ENCODE measurements at regions of chr17 and their contacts with region 1.

Region 1: GRCh38 chr17:41695954-41696756 is 7.5 kb downstream of the EIF1 start:
- DNase-seq: peak; percentile 42 to 86 (median 81)
- ATAC-seq: peak; percentile 55
- H3K4me3 ChIP-seq: no peak overlapping the region
- H3K4me3 Mint-ChIP-seq: no peak overlapping the region
- H3K27ac ChIP-seq: no peak overlapping the region
- H3K27ac Mint-ChIP-seq: peak overlapping the region; percentile 7
- H3K4me1 ChIP-seq: peaks cover 5% of the 10 kb centered on the region
- H3K4me1 Mint-ChIP-seq: peaks cover 29% of the 10 kb centered on the region
- H3K27me3 ChIP-seq: no peaks in the 10 kb centered on the region
- H3K27me3 Mint-ChIP-seq: no peaks in the 10 kb centered on the region
- CTCF ChIP-seq: peak; percentile 82

Region 2: GRCh38 chr17:41329281-41329948 is 366.7 kb before region 1 on chr17:
- CTCF ChIA-PET with region 1: no interaction called
- POLR2A ChIA-PET with region 1: no interaction called
- intact Hi-C with region 1: no loop called
- DNase-seq: peak in 3 of 9 experiments; percentile 16 to 43 (median 34)
- ATAC-seq: no peak
- H3K4me3 ChIP-seq: no peak overlapping the region
- H3K4me3 Mint-ChIP-seq: no peak overlapping the region
- H3K27ac ChIP-seq: no peak overlapping the region
- H3K27ac Mint-ChIP-seq: no peak overlapping the region
- H3K4me1 ChIP-seq: peaks cover 51% of the 10 kb centered on the region
- H3K4me1 Mint-ChIP-seq: peaks cover 48% of the 10 kb centered on the region
- H3K27me3 ChIP-seq: no peaks in the 10 kb centered on the region
- H3K27me3 Mint-ChIP-seq: no peaks in the 10 kb centered on the region
- CTCF ChIP-seq: no peak

Region 3: DNA sequence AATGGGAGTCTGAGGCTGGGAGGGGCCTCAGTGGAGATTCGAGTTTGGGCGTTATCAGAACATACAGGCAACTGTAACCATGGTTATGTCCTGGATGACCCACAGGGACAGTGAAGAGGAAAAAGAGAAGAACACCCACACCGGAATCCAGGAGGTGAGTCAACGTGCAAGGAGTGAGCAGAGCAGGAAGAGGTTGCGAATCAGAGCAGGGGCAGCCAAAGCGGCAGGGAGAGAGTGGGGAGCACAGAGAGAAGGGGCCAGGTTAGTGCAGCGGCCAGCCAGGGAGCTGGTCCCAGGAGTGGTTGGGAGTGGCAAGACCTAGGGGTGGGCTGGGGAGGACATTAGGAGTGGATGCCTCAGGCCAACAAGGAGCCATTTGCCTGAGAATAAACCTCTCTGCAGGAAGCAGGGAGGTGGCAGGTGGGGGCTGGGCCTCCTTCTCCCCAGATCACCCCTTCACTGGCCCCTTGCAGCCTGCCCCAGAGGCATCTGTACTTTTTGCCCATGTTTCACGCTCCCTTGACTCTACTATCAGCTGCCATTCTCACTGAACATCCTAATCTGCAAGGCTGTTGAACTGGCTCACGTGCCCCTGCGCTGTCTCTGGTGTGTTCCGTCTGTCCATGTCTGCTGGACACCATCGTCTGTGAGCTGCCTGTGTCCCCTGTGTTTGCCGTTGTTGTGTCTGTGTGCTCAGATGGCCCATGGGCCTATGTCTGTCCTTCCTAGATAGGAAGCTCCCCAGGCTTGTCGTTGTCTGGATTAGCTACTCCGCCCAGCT is 195.8 kb before region 1 on chr17:
- CTCF ChIA-PET with region 1: no interaction called
- POLR2A ChIA-PET with region 1: no interaction called
- intact Hi-C with region 1: no loop called
- DNase-seq: no peak
- ATAC-seq: no peak
- H3K4me3 ChIP-seq: no peak overlapping the region
- H3K4me3 Mint-ChIP-seq: no peak overlapping the region
- H3K27ac ChIP-seq: no peak overlapping the region
- H3K27ac Mint-ChIP-seq: peak overlapping the region; percentile 21
- H3K4me1 ChIP-seq: peaks cover 8% of the 10 kb centered on the region
- H3K4me1 Mint-ChIP-seq: peaks cover 6% of the 10 kb centered on the region
- H3K27me3 ChIP-seq: no peaks in the 10 kb centered on the region
- H3K27me3 Mint-ChIP-seq: peaks cover 6% of the 10 kb centered on the region
- CTCF ChIP-seq: no peak

Region 4: DNA sequence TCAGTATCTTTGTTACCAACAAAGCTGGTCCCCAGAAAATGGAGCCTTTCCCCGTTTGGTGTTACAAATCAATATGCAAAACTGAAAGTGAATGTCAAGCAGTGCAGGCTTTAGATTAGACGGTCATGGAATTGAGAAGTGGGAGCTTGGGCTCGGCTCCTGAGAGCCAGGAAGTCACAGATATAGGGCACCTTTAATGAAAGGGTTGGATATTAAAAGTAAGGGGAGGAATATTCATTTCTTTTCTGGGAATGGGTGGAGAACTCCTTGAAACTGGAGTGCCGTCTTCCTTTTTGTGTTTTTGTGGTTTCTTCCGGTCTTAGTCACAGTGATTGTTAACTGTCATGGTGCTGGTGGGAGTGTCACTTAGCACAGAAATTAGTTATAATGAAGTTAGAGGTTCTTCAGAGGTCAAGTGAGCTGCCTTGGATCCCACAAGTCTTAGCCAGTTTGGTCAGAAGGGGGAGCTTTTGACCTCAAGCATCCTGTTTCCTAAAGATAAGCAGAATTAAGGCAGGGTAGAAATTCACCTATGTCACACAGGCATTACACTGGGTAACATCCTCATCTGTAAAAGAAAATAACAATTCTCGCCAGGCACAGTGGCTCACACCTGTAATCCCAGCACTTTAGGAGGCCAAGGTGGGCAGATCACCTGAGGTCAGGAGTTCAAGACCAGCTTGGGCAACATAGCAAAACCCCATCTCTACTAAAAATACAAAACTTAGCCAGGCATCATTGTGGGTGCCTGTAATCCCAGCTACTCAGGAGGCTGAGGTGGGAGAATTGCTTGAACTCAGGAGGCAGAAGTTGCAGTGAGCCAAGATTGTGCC is 17.0 kb before region 1 on chr17:
- CTCF ChIA-PET with region 1: interaction called, 57 read pairs
- POLR2A ChIA-PET with region 1: interaction called, 159 read pairs
- intact Hi-C with region 1: loop called in 1 of 2 experiments (anchors 1 kb)
- DNase-seq: peak; percentile 15 to 89 (median 60)
- ATAC-seq: peak; percentile 88
- H3K4me3 ChIP-seq: peak overlapping the region; percentile 34 to 52
- H3K4me3 Mint-ChIP-seq: peak overlapping the region; percentile 86
- H3K27ac ChIP-seq: peak overlapping the region; percentile 64 to 74
- H3K27ac Mint-ChIP-seq: peak overlapping the region; percentile 97
- H3K4me1 ChIP-seq: peaks cover 14% of the 10 kb centered on the region
- H3K4me1 Mint-ChIP-seq: peaks cover 24% of the 10 kb centered on the region
- H3K27me3 ChIP-seq: no peaks in the 10 kb centered on the region
- H3K27me3 Mint-ChIP-seq: no peaks in the 10 kb centered on the region
- CTCF ChIP-seq: no peak

Region 5: GRCh38 chr17:41710468-41711090 is 14.4 kb after region 1 on chr17:
- CTCF ChIA-PET with region 1: interaction called, 26 read pairs
- POLR2A ChIA-PET with region 1: no interaction called
- intact Hi-C with region 1: no loop called
- DNase-seq: peak in 1 of 9 experiments; percentile 1
- ATAC-seq: no peak
- H3K4me3 ChIP-seq: no peak overlapping the region
- H3K4me3 Mint-ChIP-seq: no peak overlapping the region
- H3K27ac ChIP-seq: no peak overlapping the region
- H3K27ac Mint-ChIP-seq: no peak overlapping the region
- H3K4me1 ChIP-seq: no peaks in the 10 kb centered on the region
- H3K4me1 Mint-ChIP-seq: no peaks in the 10 kb centered on the region
- H3K27me3 ChIP-seq: peaks cover 0 to 5% of the 10 kb centered on the region in 2 experiments
- H3K27me3 Mint-ChIP-seq: peaks cover 5% of the 10 kb centered on the region
- CTCF ChIP-seq: no peak

Region 6: GRCh38 chr17:41730479-41730878 is 34.3 kb after region 1 on chr17:
- CTCF ChIA-PET with region 1: no interaction called
- POLR2A ChIA-PET with region 1: no interaction called
- intact Hi-C with region 1: no loop called
- DNase-seq: no peak
- ATAC-seq: no peak
- H3K4me3 ChIP-seq: no peak overlapping the region
- H3K4me3 Mint-ChIP-seq: no peak overlapping the region
- H3K27ac ChIP-seq: no peak overlapping the region
- H3K27ac Mint-ChIP-seq: no peak overlapping the region
- H3K4me1 ChIP-seq: peaks cover 10% of the 10 kb centered on the region
- H3K4me1 Mint-ChIP-seq: peaks cover 4% of the 10 kb centered on the region
- H3K27me3 ChIP-seq: peaks cover 12 to 20% of the 10 kb centered on the region in 2 experiments
- H3K27me3 Mint-ChIP-seq: peaks cover 26% of the 10 kb centered on the region
- CTCF ChIP-seq: no peak

Region 7: GRCh38 chr17:41825175-41825845 is 129.2 kb after region 1 on chr17:
- CTCF ChIA-PET with region 1: no interaction called
- POLR2A ChIA-PET with region 1: no interaction called
- intact Hi-C with region 1: no loop called
- DNase-seq: no peak
- ATAC-seq: no peak
- H3K4me3 ChIP-seq: no peak overlapping the region
- H3K4me3 Mint-ChIP-seq: no peak overlapping the region
- H3K27ac ChIP-seq: no peak overlapping the region
- H3K27ac Mint-ChIP-seq: no peak overlapping the region
- H3K4me1 ChIP-seq: no peaks in the 10 kb centered on the region
- H3K4me1 Mint-ChIP-seq: no peaks in the 10 kb centered on the region
- H3K27me3 ChIP-seq: no peaks in the 10 kb centered on the region
- H3K27me3 Mint-ChIP-seq: no peaks in the 10 kb centered on the region
- CTCF ChIP-seq: no peak